K562 (cell line): ENCODE measurements at regions of chr2 and their contacts with region 1.

Region 1: GRCh38 chr2:20661067-20661980 is 5.6 kb upstream of the GDF7 start:
- DNase-seq: peak; percentile 74 to 83 (median 76)
- ATAC-seq: peak; percentile 90
- H3K4me3 ChIP-seq: no peak overlapping the region
- H3K27ac ChIP-seq: no peak overlapping the region
- H3K4me1 ChIP-seq: peaks cover 0 to 10% of the 10 kb centered on the region in 2 experiments; a peak in 2 of 5 replicates
- H3K27me3 ChIP-seq: peaks cover 31 to 62% of the 10 kb centered on the region in 2 experiments
- CTCF ChIP-seq: peak; percentile 90 to 96 (median 93)
- EP300 ChIP-seq: no peak
- POLR2A ChIP-seq: no peak
- RAD21 ChIP-seq: peak; percentile 90 to 97

Region 2: GRCh38 chr2:19916385-19916950 is 744.9 kb before region 1 on chr2:
- CTCF ChIA-PET with region 1: no interaction called
- POLR2A ChIA-PET with region 1: no interaction called
- in situ Hi-C with region 1: no loop called
- intact Hi-C with region 1: no loop called
- DNase-seq: peak in 1 of 4 experiments; percentile 50
- ATAC-seq: peak; percentile 89
- H3K4me3 ChIP-seq: no peak overlapping the region
- H3K27ac ChIP-seq: peak overlapping the region; percentile 36; the same call in 1 of the 3 replicates
- H3K4me1 ChIP-seq: peaks cover 0 to 4% of the 10 kb centered on the region in 2 experiments; a peak in 2 of 5 replicates
- H3K27me3 ChIP-seq: no peaks in the 10 kb centered on the region
- CTCF ChIP-seq: no peak
- EP300 ChIP-seq: no peak
- POLR2A ChIP-seq: no peak
- RAD21 ChIP-seq: no peak

Region 3: DNA sequence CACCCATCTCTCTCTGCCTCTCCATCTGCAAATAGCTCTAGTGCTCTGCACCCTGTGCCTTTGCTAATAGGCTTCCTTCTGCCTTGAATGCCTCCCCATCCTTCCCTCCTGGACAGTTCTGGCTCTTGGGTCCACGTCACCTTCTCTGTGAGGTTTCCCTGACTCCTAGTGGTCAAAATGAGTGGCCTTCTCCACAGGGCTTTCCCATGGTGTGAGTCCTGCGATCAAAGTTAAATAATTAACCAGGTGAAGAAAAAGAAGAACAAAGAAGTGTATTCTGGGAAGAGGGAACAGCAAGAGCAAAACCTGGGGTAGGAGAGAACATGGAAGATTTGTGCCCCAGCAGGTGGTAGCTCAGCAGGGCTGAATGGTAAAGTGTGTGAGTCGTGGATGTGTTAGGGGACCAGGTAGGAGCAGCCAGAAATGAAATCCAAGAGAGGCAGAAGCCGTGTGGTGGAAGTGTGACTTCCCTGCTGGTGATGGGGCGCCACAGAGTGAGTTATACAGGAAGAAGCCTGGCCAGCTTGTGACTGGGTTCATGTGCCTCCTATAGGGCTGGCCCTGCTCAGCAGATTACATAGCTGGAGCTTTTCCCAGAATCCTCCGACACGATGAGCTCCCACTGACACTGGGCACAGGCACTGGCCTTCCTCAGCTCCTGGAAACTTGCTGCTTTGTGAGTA is 255.4 kb after region 1 on chr2:
- CTCF ChIA-PET with region 1: interaction called, 3 read pairs
- POLR2A ChIA-PET with region 1: interaction called, 4 read pairs
- in situ Hi-C with region 1: no loop called
- intact Hi-C with region 1: loop called (anchors 1 kb)
- DNase-seq: peak in 1 of 4 experiments; percentile 5
- ATAC-seq: peak; percentile 72
- H3K4me3 ChIP-seq: no peak overlapping the region
- H3K27ac ChIP-seq: no peak overlapping the region
- H3K4me1 ChIP-seq: no peaks in the 10 kb centered on the region
- H3K27me3 ChIP-seq: peaks cover 0 to 41% of the 10 kb centered on the region in 2 experiments; a peak in 2 of 5 replicates
- CTCF ChIP-seq: peak; percentile 38 to 52 (median 49); a peak in 5 of 6 replicates
- EP300 ChIP-seq: no peak
- POLR2A ChIP-seq: no peak
- RAD21 ChIP-seq: peak in 1 of 2 experiments; percentile 57; a peak in 2 of 4 replicates

Region 4: GRCh38 chr2:21025690-21026478 is 364.6 kb after region 1 on chr2:
- CTCF ChIA-PET with region 1: no interaction called
- POLR2A ChIA-PET with region 1: no interaction called
- in situ Hi-C with region 1: no loop called
- intact Hi-C with region 1: loop called (anchors 2 kb)
- DNase-seq: no peak
- ATAC-seq: no peak
- H3K4me3 ChIP-seq: no peak overlapping the region
- H3K27ac ChIP-seq: no peak overlapping the region
- H3K4me1 ChIP-seq: no peaks in the 10 kb centered on the region
- H3K27me3 ChIP-seq: peaks cover 0 to 4% of the 10 kb centered on the region in 2 experiments; a peak in 1 of 5 replicates
- CTCF ChIP-seq: no peak
- EP300 ChIP-seq: no peak
- POLR2A ChIP-seq: no peak
- RAD21 ChIP-seq: no peak

Region 5: GRCh38 chr2:21165350-21165749 is 504.0 kb after region 1 on chr2:
- CTCF ChIA-PET with region 1: interaction called, 3 read pairs
- POLR2A ChIA-PET with region 1: no interaction called
- in situ Hi-C with region 1: no loop called
- intact Hi-C with region 1: loop called (anchors 1 kb)
- DNase-seq: peak in 1 of 4 experiments; percentile 3
- ATAC-seq: no peak
- H3K4me3 ChIP-seq: no peak overlapping the region
- H3K27ac ChIP-seq: no peak overlapping the region
- H3K4me1 ChIP-seq: no peaks in the 10 kb centered on the region
- H3K27me3 ChIP-seq: no peaks in the 10 kb centered on the region
- CTCF ChIP-seq: peak in 1 of 3 experiments; percentile 28; a peak in 1 of 6 replicates
- EP300 ChIP-seq: no peak
- POLR2A ChIP-seq: no peak
- RAD21 ChIP-seq: peak in 1 of 2 experiments; percentile 49; a peak in 2 of 4 replicates

Region 6: GRCh38 chr2:21317131-21317530 is 655.8 kb after region 1 on chr2:
- CTCF ChIA-PET with region 1: no interaction called
- POLR2A ChIA-PET with region 1: no interaction called
- in situ Hi-C with region 1: no loop called
- intact Hi-C with region 1: loop called (anchors 10 kb)
- DNase-seq: peak; percentile 66 to 81 (median 68)
- ATAC-seq: peak; percentile 93
- H3K4me3 ChIP-seq: no peak overlapping the region
- H3K27ac ChIP-seq: no peak overlapping the region
- H3K4me1 ChIP-seq: no peaks in the 10 kb centered on the region; a peak in 1 of 5 replicates
- H3K27me3 ChIP-seq: no peaks in the 10 kb centered on the region
- CTCF ChIP-seq: peak; percentile 62 to 75 (median 71)
- EP300 ChIP-seq: no peak
- POLR2A ChIP-seq: no peak
- RAD21 ChIP-seq: peak; percentile 80 to 85